OCI-LY7 (cell line): ENCODE measurements at regions of chr6 and their contacts with region 1.

Region 1: DNA sequence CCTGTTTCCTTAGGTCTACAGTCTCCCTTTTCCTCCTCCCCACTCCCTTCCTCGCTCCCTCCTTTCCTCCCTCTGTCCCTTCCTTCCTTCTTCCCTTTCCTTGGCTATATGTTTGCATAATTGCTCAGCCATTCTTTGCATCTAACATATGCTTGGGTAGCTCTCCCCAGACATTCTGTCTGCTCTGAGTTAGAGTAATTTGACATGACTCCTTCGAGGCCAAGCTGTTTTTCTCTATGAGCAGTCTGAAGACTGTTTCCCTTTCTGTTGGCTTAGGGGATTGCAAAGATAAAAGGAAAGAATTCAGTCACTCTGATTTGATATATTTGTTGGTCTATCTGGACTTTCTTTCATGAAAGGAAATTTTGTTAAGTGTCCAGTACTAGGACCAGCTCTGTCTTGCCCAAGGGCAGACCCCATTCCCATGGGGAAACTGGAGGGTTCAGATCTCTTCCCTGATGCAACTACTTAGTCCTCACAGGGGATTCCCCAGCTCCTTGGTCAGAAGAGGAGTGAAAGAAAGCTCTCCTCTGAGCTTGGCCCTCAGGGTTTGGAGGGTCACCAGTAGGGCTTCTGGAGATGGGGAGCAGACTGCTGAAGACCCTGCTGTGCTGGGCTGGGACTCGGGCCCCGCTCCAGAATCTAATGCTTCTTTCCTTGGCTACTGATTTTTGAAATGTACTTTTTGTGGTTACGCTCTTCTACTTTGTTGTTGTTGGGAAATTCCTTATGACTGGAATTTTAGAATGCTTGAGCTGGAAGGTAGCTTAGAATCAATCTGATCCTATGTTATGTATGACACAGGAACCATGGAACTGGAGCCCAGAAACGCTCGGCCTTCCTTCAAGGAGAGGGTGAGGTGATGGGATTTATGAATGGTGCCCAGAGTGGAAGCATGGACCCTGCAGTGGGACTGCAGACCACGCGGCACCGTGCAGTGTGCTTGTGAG is 63.7 kb upstream of the SLC22A23 start:
- DNase-seq: no peak
- H3K4me3 ChIP-seq: no peak overlapping the region
- H3K27ac ChIP-seq: no peak overlapping the region
- H3K4me1 ChIP-seq: no peaks in the 10 kb centered on the region
- CTCF ChIP-seq: no peak

Region 2: GRCh38 chr6:3202999-3203696 is 317.4 kb before region 1 on chr6:
- CTCF ChIA-PET with region 1: no interaction called
- POLR2A ChIA-PET with region 1: interaction called, 10 read pairs
- intact Hi-C with region 1: no loop called
- DNase-seq: peak; percentile 19
- H3K4me3 ChIP-seq: no peak overlapping the region
- H3K27ac ChIP-seq: peak overlapping the region; percentile 24
- H3K4me1 ChIP-seq: peaks cover 27% of the 10 kb centered on the region
- CTCF ChIP-seq: no peak

Region 3: GRCh38 chr6:3506199-3506598 is 14.4 kb before region 1 on chr6:
- CTCF ChIA-PET with region 1: no interaction called
- POLR2A ChIA-PET with region 1: no interaction called
- intact Hi-C with region 1: no loop called
- DNase-seq: no peak
- H3K4me3 ChIP-seq: no peak overlapping the region
- H3K27ac ChIP-seq: no peak overlapping the region
- H3K4me1 ChIP-seq: no peaks in the 10 kb centered on the region
- CTCF ChIP-seq: no peak